ENCODE measurements at regions of chr5 and their contacts with region 1.

Region 1: GRCh38 chr5:36397901-36398536 is 96.3 kb upstream of the RANBP3L start:
- DNase-seq: no peak
- ATAC-seq: no peak
- H3K4me3 ChIP-seq: no peak overlapping the region
- H3K4me1 ChIP-seq: no peaks in the 10 kb centered on the region
- CTCF ChIP-seq: no peak

Region 2: DNA sequence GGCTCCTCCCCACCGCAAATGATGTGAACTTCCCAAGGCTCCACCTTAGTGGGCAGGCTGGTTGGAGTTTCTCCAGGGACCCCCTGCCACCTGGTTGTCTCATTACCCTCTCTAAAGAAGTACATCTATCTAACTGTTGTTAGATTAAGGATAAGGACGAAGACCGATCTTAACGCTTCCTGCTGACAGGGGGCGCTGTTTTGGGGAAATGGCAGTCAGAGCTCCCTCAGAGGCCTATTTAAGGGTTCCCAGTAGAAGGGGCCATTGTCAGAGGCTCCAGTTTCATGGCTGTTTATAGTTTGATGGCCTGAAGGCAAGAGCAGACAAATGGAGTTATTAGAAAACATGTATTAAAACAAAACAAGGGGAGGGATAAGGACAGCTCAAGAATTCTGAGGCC is 680.3 kb before region 1 on chr5:
- intact Hi-C with region 1: no loop called
- DNase-seq: no peak
- ATAC-seq: no peak
- H3K4me3 ChIP-seq: no peak overlapping the region
- H3K4me1 ChIP-seq: no peaks in the 10 kb centered on the region
- CTCF ChIP-seq: no peak

Region 3: DNA sequence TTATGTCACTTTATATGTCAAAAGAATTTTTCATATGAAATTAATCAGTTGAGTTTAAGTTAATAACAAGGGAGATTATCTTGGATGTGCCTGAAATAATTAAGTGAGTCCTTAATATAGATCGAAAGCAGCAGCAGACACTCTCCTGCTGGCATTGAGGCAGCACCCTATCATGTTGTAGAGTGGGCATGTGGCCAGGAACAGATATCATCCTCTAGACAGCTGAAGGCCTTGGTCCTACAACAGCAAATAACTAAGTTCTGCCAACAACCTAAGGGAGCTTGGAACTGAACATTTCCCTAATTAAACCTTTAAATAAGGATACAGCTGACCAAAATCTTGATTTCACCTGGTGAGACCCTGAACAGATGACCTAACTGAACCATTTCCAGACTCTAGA is 381.0 kb before region 1 on chr5:
- intact Hi-C with region 1: no loop called
- DNase-seq: peak in 1 of 3 donors; percentile 12
- ATAC-seq: no peak
- H3K4me3 ChIP-seq: no peak overlapping the region
- H3K4me1 ChIP-seq: no peaks in the 10 kb centered on the region
- CTCF ChIP-seq: no peak

Region 4: DNA sequence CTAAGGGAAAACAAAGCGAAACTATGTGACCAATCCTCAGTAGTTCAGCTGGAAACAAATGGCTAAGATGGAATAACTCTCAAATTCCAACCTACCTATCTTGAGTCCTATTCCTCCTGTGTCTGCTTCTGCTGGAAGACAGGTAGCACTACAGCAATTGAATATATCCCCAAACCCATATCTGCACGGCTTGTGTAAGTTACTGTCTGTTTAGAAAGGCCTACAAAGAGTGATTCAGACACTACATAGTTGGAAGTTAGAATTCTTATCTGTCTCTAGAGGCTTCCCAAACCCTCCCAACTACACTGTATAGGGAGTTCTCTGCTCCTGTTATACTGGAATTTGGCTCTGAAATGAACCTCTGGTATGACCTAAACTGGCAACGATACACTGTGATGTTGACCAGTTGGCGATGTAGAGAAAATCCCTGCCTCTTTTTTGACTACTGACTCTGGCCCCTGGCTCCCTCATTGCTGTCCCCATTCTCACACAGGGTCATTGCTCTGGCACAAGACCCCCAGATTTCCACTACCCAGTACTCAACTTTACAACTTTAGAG is 133.7 kb before region 1 on chr5:
- intact Hi-C with region 1: loop called in 1 of 2 experiments (anchors 10 kb)
- DNase-seq: no peak
- ATAC-seq: no peak
- H3K4me3 ChIP-seq: no peak overlapping the region
- H3K4me1 ChIP-seq: no peaks in the 10 kb centered on the region
- CTCF ChIP-seq: no peak